ENCODE measurements at regions of chr7 and their contacts with region 1.

Region 1: GRCh38 chr7:101138213-101138870 is 11.4 kb downstream of the SERPINE1 start:
- DNase-seq: peak; percentile 88
- H3K4me3 ChIP-seq: peak overlapping the region; percentile 3 to 4; a peak in 2 of 4 replicates
- H3K27ac ChIP-seq: peak overlapping the region; percentile 71 to 98
- H3K4me1 ChIP-seq: peaks cover 11 to 24% of the 10 kb centered on the region in 2 experiments; a peak in 3 of 4 replicates
- H3K27me3 ChIP-seq: no peaks in the 10 kb centered on the region
- CTCF ChIP-seq: peak; percentile 99
- EP300 ChIP-seq: peak; percentile 75 to 98
- RAD21 ChIP-seq: peak; percentile 63

Region 2: GRCh38 chr7:101077303-101078089 is 60.8 kb before region 1 on chr7:
- CTCF ChIA-PET with region 1: interaction called, 15 read pairs
- POLR2A ChIA-PET with region 1: no interaction called
- DNase-seq: peak; percentile 88
- H3K4me3 ChIP-seq: no peak overlapping the region
- H3K27ac ChIP-seq: no peak overlapping the region
- H3K4me1 ChIP-seq: no peaks in the 10 kb centered on the region
- H3K27me3 ChIP-seq: peaks cover 14% of the 10 kb centered on the region; the same call in 1 of the 2 replicates
- CTCF ChIP-seq: peak; percentile 99
- EP300 ChIP-seq: no peak
- RAD21 ChIP-seq: peak; percentile 88

Region 3: GRCh38 chr7:101126651-101127280 is 11.6 kb before region 1 on chr7 and contains the start of gene SERPINE1:
- CTCF ChIA-PET with region 1: interaction called, 38 read pairs
- POLR2A ChIA-PET with region 1: no interaction called
- DNase-seq: peak; percentile 83
- H3K4me3 ChIP-seq: peak within 1 kb of the TSS; percentile 46 to 85; a peak in 3 of 4 replicates
- H3K27ac ChIP-seq: peak within 1 kb of the TSS; percentile 61 to 98
- H3K4me1 ChIP-seq: peaks cover 14 to 39% of the 10 kb centered on the region in 2 experiments; a peak in 3 of 4 replicates
- H3K27me3 ChIP-seq: no peaks in the 10 kb centered on the region
- CTCF ChIP-seq: peak; percentile 60
- EP300 ChIP-seq: peak in 1 of 2 experiments; percentile 55; a peak in 1 of 4 replicates
- RAD21 ChIP-seq: no peak; the same call in 1 of the 2 replicates
- polyA plus RNA-seq, gene SERPINE1: 4,174 and 5,753 TPM in 2 replicates

Region 4: DNA sequence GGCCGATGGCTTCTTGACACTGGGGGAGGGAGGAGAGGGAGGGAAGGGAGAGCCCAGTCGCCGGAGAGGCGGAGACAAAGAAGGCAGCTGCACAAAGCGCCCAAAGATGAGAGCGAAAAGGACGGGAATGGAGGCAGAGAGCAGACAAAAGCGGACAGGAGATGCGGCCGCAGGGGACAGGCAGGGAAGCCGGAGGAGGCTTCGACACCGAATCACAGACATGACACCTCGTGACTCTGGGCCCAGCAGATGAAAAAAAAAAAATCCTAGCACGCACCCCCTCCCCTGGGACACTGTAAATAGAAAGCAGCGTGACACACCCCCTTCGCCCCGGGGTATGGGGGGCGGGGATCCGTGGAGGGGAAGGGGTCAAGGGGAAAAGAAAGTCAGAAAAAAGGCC is 40.8 kb after region 1 on chr7:
- CTCF ChIA-PET with region 1: interaction called, 51 read pairs
- POLR2A ChIA-PET with region 1: interaction called, 3 read pairs
- DNase-seq: peak; percentile 81
- H3K4me3 ChIP-seq: peak overlapping the region; percentile 48 to 49; a peak in 3 of 4 replicates
- H3K27ac ChIP-seq: no peak overlapping the region; a peak in 1 of 4 replicates
- H3K4me1 ChIP-seq: peaks cover 0 to 16% of the 10 kb centered on the region in 2 experiments; a peak in 1 of 4 replicates
- H3K27me3 ChIP-seq: peaks cover 28% of the 10 kb centered on the region
- CTCF ChIP-seq: no peak
- EP300 ChIP-seq: no peak
- RAD21 ChIP-seq: no peak

Region 5: GRCh38 chr7:101201695-101202604 is 63.6 kb after region 1 on chr7:
- CTCF ChIA-PET with region 1: interaction called, 257 read pairs
- POLR2A ChIA-PET with region 1: no interaction called
- DNase-seq: peak; percentile 42
- H3K4me3 ChIP-seq: no peak overlapping the region
- H3K27ac ChIP-seq: no peak overlapping the region
- H3K4me1 ChIP-seq: no peaks in the 10 kb centered on the region
- H3K27me3 ChIP-seq: no peaks in the 10 kb centered on the region; the same call in 1 of the 2 replicates
- CTCF ChIP-seq: no peak
- EP300 ChIP-seq: no peak
- RAD21 ChIP-seq: no peak

Region 6: GRCh38 chr7:101287032-101287431 is 148.7 kb after region 1 on chr7:
- CTCF ChIA-PET with region 1: interaction called, 68 read pairs
- POLR2A ChIA-PET with region 1: no interaction called
- DNase-seq: no peak
- H3K4me3 ChIP-seq: no peak overlapping the region
- H3K27ac ChIP-seq: no peak overlapping the region
- H3K4me1 ChIP-seq: peaks cover 0 to 2% of the 10 kb centered on the region in 2 experiments; a peak in 1 of 4 replicates
- H3K27me3 ChIP-seq: peaks cover 23% of the 10 kb centered on the region
- CTCF ChIP-seq: no peak
- EP300 ChIP-seq: no peak
- RAD21 ChIP-seq: no peak